ENCODE measurements at regions of chr2 and their contacts with region 1.

Region 1: GRCh38 chr2:54899576-54900200 is 150.6 kb downstream of the RTN4 start:
- DNase-seq: no peak
- ATAC-seq: peak; percentile 51 to 64
- H3K4me3 ChIP-seq: no peak overlapping the region
- H3K27ac ChIP-seq: peak overlapping the region in 3 of 4 donors; percentile 22 to 72 (median 69)
- H3K4me1 ChIP-seq: peaks cover 16 to 22% of the 10 kb centered on the region in 2 donors
- H3K27me3 ChIP-seq: no peaks in the 10 kb centered on the region
- CTCF ChIP-seq: peak; percentile 21 to 66 (median 44)
- POLR2A ChIP-seq: no peak

Region 2: DNA sequence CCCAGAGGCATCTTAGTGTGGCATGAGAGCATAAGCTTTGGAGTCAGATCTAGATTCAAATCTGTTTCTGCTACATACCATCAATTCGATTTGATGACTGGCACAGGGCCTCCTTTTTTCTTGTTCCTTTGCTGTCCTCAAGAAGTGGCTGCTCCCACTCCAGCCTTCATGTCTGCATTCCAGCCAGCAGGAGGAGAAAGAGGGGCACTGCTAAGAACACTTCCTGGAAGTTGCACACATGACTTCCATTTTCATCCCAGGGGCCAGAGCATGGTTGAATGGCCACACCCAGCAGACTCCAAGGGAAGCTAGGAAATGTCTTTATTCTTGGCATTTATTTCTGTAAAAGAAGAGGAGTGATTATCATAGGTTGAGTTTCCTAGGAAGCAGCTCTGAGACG is 125.8 kb before region 1 on chr2:
- in situ Hi-C with region 1: no loop called
- intact Hi-C with region 1: no loop called
- DNase-seq: no peak
- ATAC-seq: no peak
- H3K4me3 ChIP-seq: no peak overlapping the region
- H3K27ac ChIP-seq: no peak overlapping the region
- H3K4me1 ChIP-seq: peaks cover 0 to 4% of the 10 kb centered on the region in 2 donors
- H3K27me3 ChIP-seq: no peaks in the 10 kb centered on the region
- CTCF ChIP-seq: no peak
- POLR2A ChIP-seq: no peak

Region 3: GRCh38 chr2:54977149-54977548 is 77.5 kb after region 1 on chr2:
- in situ Hi-C with region 1: no loop called
- intact Hi-C with region 1: loop called (anchors 2 kb)
- DNase-seq: no peak
- ATAC-seq: no peak
- H3K4me3 ChIP-seq: peak overlapping the region; percentile 3 to 36 (median 21)
- H3K27ac ChIP-seq: peak overlapping the region; percentile 89 to 94 (median 91)
- H3K4me1 ChIP-seq: peaks cover 85 to 98% of the 10 kb centered on the region in 2 donors
- H3K27me3 ChIP-seq: no peaks in the 10 kb centered on the region
- CTCF ChIP-seq: no peak
- POLR2A ChIP-seq: no peak

Region 4: GRCh38 chr2:55168221-55169154 is 268.8 kb after region 1 on chr2:
- in situ Hi-C with region 1: loop called in 2 of 4 experiments (anchors 10 to 25 kb)
- intact Hi-C with region 1: no loop called
- DNase-seq: peak in 1 of 2 donors; percentile 41
- ATAC-seq: peak; percentile 75 to 79
- H3K4me3 ChIP-seq: no peak overlapping the region
- H3K27ac ChIP-seq: peak overlapping the region in 1 of 4 donors; percentile 1
- H3K4me1 ChIP-seq: peaks cover 0 to 8% of the 10 kb centered on the region in 2 donors
- H3K27me3 ChIP-seq: no peaks in the 10 kb centered on the region
- CTCF ChIP-seq: peak; percentile 26 to 56 (median 52)
- POLR2A ChIP-seq: no peak

Region 5: DNA sequence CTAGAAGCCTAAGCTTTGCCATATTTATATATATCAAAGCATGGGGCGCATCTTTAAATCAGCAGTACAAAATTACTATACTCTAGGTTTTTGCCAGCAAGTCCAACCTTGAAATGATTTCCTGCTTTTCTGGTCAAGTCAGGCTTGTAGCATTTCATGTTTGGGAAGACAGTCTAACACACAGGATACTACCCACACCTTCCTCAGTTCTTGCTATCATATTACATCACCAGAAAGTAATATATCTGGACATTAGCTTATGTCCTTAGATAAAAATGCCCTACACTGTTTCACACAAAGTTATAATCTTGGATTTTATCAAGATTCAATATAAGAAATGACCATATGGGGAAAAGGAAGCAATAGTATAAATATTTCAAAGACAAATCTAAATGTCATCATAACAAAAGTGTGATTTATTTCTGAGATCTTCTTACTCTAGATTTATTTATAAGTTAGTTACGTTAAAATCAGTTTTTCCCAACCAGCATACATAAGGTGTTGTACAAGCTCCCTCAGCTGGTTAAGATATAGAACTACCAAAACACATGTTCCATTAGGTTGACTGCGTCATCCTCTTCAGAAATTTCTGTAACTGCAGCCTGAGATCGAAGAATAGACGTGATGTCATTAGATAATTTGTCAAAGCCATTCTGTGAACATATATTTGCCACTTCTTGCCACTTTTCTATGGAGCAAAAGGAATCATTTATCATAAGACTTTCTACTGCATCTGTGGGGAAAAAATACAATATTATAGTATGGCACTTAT is 275.8 kb after region 1 on chr2:
- in situ Hi-C with region 1: loop called in 3 of 4 experiments (anchors 10 to 25 kb)
- intact Hi-C with region 1: loop called (anchors 2 kb)
- DNase-seq: no peak
- ATAC-seq: peak; percentile 89 to 90
- H3K4me3 ChIP-seq: no peak overlapping the region
- H3K27ac ChIP-seq: no peak overlapping the region
- H3K4me1 ChIP-seq: peaks cover 0 to 6% of the 10 kb centered on the region in 2 donors
- H3K27me3 ChIP-seq: no peaks in the 10 kb centered on the region
- CTCF ChIP-seq: peak; percentile 16 to 61 (median 58)
- POLR2A ChIP-seq: no peak